ENCODE measurements at regions of chr14 and their contacts with region 1.

Region 1: GRCh38 chr14:73472185-73473114 is 14.1 kb upstream of the NUMB start:
- DNase-seq: peak; percentile 63

Region 2: GRCh38 chr14:73173092-73173735 is 299.2 kb before region 1 on chr14:
- CTCF ChIA-PET with region 1: interaction called, 16 read pairs
- POLR2A ChIA-PET with region 1: no interaction called
- DNase-seq: peak; percentile 19

Region 3: DNA sequence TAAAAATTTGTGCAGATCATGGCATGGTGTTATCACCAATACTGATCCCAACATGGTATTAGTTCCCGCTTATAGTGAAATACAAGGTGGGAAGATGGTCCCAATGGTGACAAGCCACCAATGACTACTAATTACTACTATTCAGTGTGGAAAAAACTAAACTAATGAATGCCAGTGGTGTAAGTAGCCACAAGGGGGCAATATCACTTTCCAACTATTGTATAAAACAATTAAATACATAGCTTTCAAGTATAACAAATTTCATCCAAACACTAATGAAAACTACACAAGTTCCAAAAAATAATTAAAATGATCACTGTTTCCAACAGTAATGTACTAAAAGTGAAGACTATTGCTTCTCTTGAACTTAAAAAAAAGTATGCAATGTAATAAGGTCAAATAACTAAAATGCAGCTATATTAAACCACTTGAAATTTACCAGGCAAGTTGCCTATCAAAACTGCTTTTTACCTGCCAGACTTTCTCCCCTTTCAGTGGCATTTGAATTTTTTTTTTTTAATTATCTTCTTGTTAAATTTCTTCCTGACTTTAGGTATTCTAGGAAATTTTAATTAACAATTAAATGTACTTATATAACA is 177.2 kb before region 1 on chr14:
- CTCF ChIA-PET with region 1: interaction called, 38 read pairs
- POLR2A ChIA-PET with region 1: interaction called, 9 read pairs
- DNase-seq: peak; percentile 34